GM13977 (cell line): ENCODE measurements at regions of chr18 and their contacts with region 1.

Region 1: GRCh38 chr18:57881818-57882413 is 78.8 kb upstream of the ATP8B1 start:
- DNase-seq: peak; percentile 55
- CTCF ChIP-seq: peak; percentile 94

Region 2: DNA sequence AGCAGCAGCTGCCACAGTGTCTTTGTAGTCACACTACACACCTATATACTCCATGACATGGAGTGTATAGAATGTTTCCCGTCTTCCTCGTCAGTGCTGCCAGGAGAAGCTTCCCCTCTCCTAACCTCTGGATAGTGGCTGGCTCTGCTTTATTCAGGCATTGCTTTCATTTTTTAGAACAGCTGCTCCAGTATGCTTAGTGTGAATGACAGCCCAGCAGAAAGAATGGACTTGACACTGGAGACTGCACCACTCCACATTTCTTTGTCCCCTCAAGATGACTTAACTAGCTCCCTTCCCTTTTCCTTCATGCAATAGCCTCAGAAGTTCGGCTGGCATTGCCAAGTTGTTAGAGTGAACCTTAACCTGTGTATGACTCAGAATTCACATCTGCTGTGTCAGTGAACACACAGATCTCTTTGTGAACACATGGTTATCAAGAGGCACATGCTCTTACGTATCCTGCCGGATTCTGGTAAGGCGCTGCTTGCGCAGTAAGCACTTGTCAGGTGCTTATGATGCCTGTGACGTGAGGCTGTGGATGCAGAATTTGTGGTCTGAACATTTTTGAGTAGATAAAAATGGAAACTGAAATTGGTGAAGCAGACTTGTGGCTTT is 236.0 kb after region 1 on chr18:
- in situ Hi-C with region 1: loop called (anchors 10 kb)
- DNase-seq: no peak
- CTCF ChIP-seq: no peak